ENCODE measurements at regions of chr20 and their contacts with region 1.

Region 1: DNA sequence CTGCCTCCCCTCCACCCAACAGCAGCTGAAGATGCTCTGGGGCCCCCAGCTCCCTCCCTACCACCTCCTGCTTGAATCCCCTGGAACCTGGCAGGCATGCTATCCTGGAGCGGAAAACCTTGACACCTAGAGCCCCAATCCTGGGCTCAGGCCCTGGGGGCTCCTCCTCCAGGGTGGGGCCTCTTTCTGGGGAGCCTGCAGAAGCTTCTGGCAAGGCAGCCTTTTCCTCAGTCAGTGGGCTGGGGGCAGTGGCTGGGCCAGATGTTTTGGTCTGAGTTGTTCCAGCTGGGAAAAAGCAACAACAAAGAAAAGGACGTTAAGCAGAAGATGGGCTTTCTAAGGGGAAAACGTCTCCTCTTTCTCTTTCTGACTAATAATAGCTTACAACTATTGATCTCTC is 21.1 kb downstream of the KIAA1755 start:
- DNase-seq: no peak

Region 2: GRCh38 chr20:38290832-38291581 is 51.6 kb after region 1 on chr20:
- intact Hi-C with region 1: no loop called
- DNase-seq: peak; percentile 86

Region 3: DNA sequence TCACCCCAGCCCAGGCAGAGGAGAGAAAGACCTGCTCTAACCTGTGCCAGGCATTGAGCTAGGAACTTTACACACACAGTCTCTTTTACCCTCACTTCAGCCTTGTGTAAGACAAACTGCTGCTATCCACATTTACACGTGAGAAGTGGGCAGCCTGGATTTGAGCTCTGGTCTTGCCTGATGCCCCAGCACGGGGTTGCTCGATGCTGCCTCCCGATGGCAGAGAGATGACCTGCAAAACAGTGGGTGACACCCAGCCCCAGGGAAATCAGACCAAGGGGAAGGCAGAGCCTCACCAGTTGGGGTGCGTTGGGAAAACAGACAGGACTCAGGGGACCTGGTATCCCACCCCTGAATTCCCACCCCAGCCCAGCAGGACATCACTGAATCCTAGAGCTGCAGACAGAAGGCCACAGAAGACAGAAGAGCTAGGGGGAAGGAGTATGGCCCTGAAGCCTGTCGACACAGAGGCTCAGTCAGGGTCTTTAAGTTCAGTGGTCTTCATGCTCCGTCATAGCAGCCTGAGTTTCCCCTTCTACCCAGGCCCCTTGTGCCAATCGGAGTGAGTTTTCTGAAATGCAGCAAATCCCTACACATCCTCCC is 65.5 kb after region 1 on chr20:
- intact Hi-C with region 1: loop called in 1 of 2 experiments (anchors 5 kb)
- DNase-seq: no peak

Region 4: DNA sequence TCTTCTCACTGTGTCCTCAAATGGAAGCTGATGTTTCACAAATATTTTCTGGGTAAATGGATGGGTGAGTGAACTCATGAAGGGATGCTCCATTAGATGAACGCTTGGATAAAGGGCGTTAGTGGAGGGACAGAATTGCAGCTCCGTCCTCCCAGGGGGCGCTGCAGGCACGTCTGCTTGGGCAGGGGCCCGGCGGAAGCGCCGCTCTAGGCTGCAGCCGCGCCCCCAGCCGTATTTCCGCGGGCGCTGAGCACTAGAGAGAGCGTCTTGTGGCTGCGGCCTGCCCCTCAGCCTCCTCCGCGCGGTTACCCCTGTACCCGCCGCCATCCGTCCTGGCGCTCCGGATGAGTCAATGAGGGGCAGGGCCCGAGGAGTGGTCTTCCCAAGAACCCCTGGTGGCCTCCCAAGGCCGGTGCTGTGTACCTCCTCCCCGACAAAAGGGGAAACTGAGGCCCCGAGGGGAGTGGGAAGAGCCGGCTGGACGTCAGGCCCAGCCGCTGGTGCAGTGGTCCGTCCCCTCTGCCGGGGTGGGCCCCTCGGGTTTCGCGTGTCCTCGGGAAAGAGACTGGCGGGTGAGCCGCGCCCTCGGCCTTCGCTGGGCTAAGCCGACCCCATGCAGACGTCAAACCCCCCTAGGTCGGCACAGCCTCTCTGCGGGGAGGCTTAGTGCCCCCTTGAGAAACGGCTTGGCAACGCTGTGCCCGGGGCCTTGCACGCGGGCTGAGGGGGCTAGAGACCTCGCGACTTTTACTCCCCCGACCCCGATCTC is 207.2 kb after region 1 on chr20:
- intact Hi-C with region 1: no loop called
- DNase-seq: peak; percentile 98